A673 (cell line): ENCODE measurements at regions of chr2 and their contacts with region 1.

Region 1: DNA sequence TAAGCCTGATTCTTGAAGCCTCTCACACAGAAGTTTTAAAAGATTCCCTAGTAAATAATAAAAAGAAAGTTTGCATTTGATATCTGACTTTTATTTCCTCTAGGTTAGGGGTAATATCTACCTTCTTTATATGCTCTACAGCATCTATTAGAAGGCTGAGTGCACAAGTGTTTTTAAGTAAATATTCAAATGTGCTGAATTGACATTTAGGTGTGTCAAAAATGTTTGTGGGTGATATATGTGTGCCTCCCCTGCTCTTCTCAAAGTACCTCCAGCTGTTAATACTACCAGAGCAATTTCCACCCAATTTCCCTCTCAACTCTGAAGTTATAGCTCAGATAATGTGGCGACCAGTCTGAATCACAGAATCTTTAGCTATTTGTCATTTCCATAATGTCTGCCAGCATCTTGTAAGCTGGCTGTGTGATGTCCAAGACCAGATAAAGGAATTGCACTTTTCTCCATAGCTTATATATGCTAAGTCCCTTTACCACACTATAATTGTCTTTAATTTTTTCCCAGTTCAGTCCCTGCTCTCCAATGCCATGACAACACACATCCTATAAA is 24.4 kb upstream of the ERMN start:
- DNase-seq: no peak
- H3K4me3 ChIP-seq: no peak overlapping the region
- H3K27ac ChIP-seq: no peak overlapping the region
- H3K4me1 ChIP-seq: no peaks in the 10 kb centered on the region
- H3K27me3 ChIP-seq: no peaks in the 10 kb centered on the region
- CTCF ChIP-seq: no peak

Region 2: DNA sequence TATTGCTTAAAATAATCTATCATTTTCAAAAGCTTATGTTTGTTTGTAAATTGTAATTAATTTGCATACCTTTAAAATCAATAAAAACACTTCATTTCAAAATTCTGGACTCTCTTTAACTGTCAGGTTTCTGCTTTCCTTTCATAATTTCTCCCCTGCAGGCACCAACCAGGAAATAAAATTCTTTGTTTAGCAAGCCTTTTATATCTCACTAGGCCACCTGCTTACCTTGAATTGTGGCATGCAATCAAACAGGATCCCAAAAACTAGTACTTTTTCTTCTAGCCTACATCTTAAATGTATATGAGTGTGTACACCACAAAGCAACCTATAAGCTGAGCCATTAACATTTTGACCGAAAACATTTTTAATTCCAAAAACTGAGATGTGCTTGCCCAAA is 1250.7 kb before region 1 on chr2:
- CTCF ChIA-PET with region 1: interaction called, 10 read pairs
- POLR2A ChIA-PET with region 1: no interaction called
- intact Hi-C with region 1: no loop called
- DNase-seq: no peak
- H3K4me3 ChIP-seq: no peak overlapping the region
- H3K27ac ChIP-seq: no peak overlapping the region
- H3K4me1 ChIP-seq: no peaks in the 10 kb centered on the region
- H3K27me3 ChIP-seq: peaks cover 13% of the 10 kb centered on the region
- CTCF ChIP-seq: no peak

Region 3: DNA sequence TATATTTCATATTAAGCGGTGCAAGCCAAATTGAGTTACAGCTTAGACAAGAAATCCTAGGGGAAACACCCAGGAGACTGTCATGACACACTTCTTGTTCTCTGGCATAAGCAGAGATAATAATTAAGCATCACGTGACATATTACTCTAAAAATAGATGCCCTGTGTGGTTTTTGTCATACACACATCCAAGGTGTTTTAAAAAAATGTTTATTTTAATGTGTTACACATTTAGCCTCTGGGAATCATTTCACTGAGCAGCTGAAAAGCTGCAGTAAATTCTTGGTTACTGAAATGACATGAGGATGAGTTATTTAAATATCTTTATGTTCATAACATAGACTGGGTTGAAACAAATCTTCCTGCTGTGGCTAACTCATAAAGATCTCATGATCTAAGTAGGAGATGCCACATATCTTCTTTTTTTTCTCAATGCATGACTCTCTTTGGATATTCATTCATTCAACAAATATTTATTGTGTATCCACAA is 13.6 kb after region 1 on chr2:
- CTCF ChIA-PET with region 1: no interaction called
- POLR2A ChIA-PET with region 1: no interaction called
- intact Hi-C with region 1: no loop called
- DNase-seq: no peak
- H3K4me3 ChIP-seq: no peak overlapping the region
- H3K27ac ChIP-seq: no peak overlapping the region
- H3K4me1 ChIP-seq: no peaks in the 10 kb centered on the region
- H3K27me3 ChIP-seq: no peaks in the 10 kb centered on the region
- CTCF ChIP-seq: no peak